Heart left ventricle (tissue), 16 donors: ENCODE measurements at regions of chr13 and their contacts with region 1.

Region 1: GRCh38 chr13:28324181-28324789 is 170.6 kb downstream of the FLT1 start:
- DNase-seq: peak in 4 of 5 donors; percentile 50 to 70 (median 62)
- ATAC-seq: peak; percentile 72 to 88 (median 81)
- H3K4me3 ChIP-seq: peak overlapping the region in 1 of 12 donors; percentile 11
- H3K27ac ChIP-seq: peak overlapping the region in 11 of 12 donors; percentile 10 to 82 (median 63)
- H3K4me1 ChIP-seq: peaks cover 4 to 55% (median 25%) of the 10 kb centered on the region in 12 donors
- H3K27me3 ChIP-seq: no peaks in the 10 kb centered on the region
- CTCF ChIP-seq: peak; percentile 67 to 91 (median 79)
- POLR2A ChIP-seq: no peak

Region 2: GRCh38 chr13:28204690-28205443 is 119.4 kb before region 1 on chr13:
- intact Hi-C with region 1: no loop called
- DNase-seq: no peak
- ATAC-seq: no peak
- H3K4me3 ChIP-seq: no peak overlapping the region
- H3K27ac ChIP-seq: no peak overlapping the region
- H3K4me1 ChIP-seq: no peaks in the 10 kb centered on the region
- H3K27me3 ChIP-seq: no peaks in the 10 kb centered on the region
- CTCF ChIP-seq: no peak
- POLR2A ChIP-seq: no peak

Region 3: GRCh38 chr13:28401303-28402056 is 77.2 kb after region 1 on chr13:
- intact Hi-C with region 1: loop called in 1 of 10 experiments (anchors 5 kb)
- DNase-seq: no peak
- ATAC-seq: peak in 2 of 4 donors; percentile 47 to 74
- H3K4me3 ChIP-seq: no peak overlapping the region
- H3K27ac ChIP-seq: peak overlapping the region in 9 of 12 donors; percentile 6 to 59 (median 34)
- H3K4me1 ChIP-seq: peaks cover 0 to 55% (median 21%) of the 10 kb centered on the region in 12 donors
- H3K27me3 ChIP-seq: no peaks in the 10 kb centered on the region
- CTCF ChIP-seq: no peak
- POLR2A ChIP-seq: no peak

Region 4: DNA sequence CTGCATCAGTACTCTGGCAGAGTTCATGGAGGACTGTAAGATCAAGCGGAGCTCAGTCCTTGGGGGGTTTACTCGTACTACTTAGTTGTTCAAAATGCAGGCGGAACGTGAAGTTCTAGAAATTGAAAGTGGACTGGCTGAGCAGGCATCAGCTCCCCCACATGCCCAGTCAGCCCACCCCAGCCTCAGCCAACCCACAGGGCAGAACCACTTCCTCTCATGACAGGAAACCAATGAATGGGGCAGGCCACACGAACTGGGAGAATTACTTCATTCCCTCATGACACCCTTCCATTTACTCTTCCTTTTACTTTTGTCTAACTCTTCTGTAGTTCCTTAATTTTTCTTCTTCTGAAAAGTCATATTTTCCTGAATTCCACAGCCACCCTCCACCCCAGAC is 98.7 kb after region 1 on chr13:
- intact Hi-C with region 1: loop called in 1 of 10 experiments (anchors 10 kb)
- DNase-seq: peak; percentile 39 to 65 (median 48)
- ATAC-seq: peak in 3 of 4 donors; percentile 70 to 77 (median 76)
- H3K4me3 ChIP-seq: peak overlapping the region in 1 of 12 donors; percentile 19
- H3K27ac ChIP-seq: peak overlapping the region in 1 of 12 donors; percentile 46
- H3K4me1 ChIP-seq: peaks cover 0 to 49% (median 16%) of the 10 kb centered on the region in 12 donors
- H3K27me3 ChIP-seq: peaks cover 0 to 4% (median 0%) of the 10 kb centered on the region in 9 donors
- CTCF ChIP-seq: no peak
- POLR2A ChIP-seq: no peak

Region 5: GRCh38 chr13:28489524-28489931 is 165.2 kb after region 1 on chr13:
- intact Hi-C with region 1: loop called in 5 of 10 experiments (anchors 5 to 10 kb)
- DNase-seq: no peak
- ATAC-seq: no peak
- H3K4me3 ChIP-seq: peak overlapping the region in 9 of 12 donors; percentile 15 to 86 (median 73)
- H3K27ac ChIP-seq: peak overlapping the region in 8 of 12 donors; percentile 2 to 45 (median 21)
- H3K4me1 ChIP-seq: peaks cover 0 to 59% (median 24%) of the 10 kb centered on the region in 12 donors
- H3K27me3 ChIP-seq: peaks cover 0 to 59% (median 38%) of the 10 kb centered on the region in 9 donors
- CTCF ChIP-seq: no peak
- POLR2A ChIP-seq: no peak

Region 6: GRCh38 chr13:28582225-28582891 is 258.1 kb after region 1 on chr13:
- intact Hi-C with region 1: no loop called
- DNase-seq: no peak
- ATAC-seq: peak in 1 of 4 donors; percentile 28
- H3K4me3 ChIP-seq: no peak overlapping the region
- H3K27ac ChIP-seq: no peak overlapping the region
- H3K4me1 ChIP-seq: peaks cover 0 to 21% (median 0%) of the 10 kb centered on the region in 12 donors
- H3K27me3 ChIP-seq: peaks cover 0 to 5% (median 0%) of the 10 kb centered on the region in 9 donors
- CTCF ChIP-seq: no peak
- POLR2A ChIP-seq: no peak